ENCODE measurements at regions of chr14 and their contacts with region 1.

Region 1: DNA sequence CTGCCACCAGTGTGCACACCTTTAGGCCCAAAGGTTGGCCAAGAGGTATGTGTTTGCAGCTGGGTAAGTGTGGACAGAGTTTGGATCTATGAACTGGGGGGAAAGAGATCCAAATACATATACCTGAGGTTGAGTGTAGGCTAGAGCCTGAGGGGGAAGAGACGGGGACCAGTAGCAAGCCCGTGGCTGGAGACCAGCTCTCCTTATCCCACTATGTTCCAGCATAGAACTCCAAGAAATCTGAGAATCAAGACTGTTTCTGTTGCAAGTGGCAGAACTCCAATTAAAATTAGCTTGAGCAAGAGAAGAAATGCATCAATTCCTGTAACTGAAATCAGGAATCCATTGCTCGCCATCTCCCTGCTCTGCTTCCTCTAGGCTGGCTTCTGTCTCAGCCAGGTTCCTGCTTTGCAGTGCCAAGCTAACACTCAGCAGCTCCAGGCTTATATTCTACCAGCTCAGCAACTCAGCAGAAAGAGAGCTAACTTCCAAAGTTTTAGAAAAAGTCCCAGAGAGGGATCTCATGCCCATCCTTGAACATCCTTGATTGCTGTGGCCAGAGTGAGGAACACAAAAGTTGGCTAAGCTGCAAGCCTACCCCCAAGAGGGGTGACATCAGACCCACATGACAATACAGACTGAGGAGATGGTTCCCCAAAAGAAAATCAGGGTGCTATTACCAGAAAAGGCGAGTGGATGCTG is 1.5 kb upstream of the PCK2 start:
- DNase-seq: no peak
- ATAC-seq: no peak
- H3K4me3 ChIP-seq: no peak overlapping the region
- H3K27ac ChIP-seq: peak overlapping the region; percentile 84; the same call in 1 of the 2 replicates
- H3K4me1 ChIP-seq: peaks cover 5% of the 10 kb centered on the region; the same call in 1 of the 2 replicates
- H3K27me3 ChIP-seq: no peaks in the 10 kb centered on the region
- CTCF ChIP-seq: no peak

Region 2: GRCh38 chr14:23580948-23581281 is 511.7 kb before region 1 on chr14:
- CTCF ChIA-PET with region 1: no interaction called
- POLR2A ChIA-PET with region 1: no interaction called
- in situ Hi-C with region 1: no loop called
- intact Hi-C with region 1: no loop called
- DNase-seq: no peak
- ATAC-seq: no peak
- H3K4me3 ChIP-seq: no peak overlapping the region
- H3K27ac ChIP-seq: no peak overlapping the region
- H3K4me1 ChIP-seq: no peaks in the 10 kb centered on the region
- H3K27me3 ChIP-seq: no peaks in the 10 kb centered on the region
- CTCF ChIP-seq: no peak

Region 3: GRCh38 chr14:24013654-24014514 is 78.8 kb before region 1 on chr14:
- CTCF ChIA-PET with region 1: no interaction called
- POLR2A ChIA-PET with region 1: no interaction called
- in situ Hi-C with region 1: no loop called
- intact Hi-C with region 1: loop called (anchors 2 kb)
- DNase-seq: peak; percentile 54
- ATAC-seq: peak; percentile 91; the same call in 1 of the 2 replicates
- H3K4me3 ChIP-seq: no peak overlapping the region
- H3K27ac ChIP-seq: no peak overlapping the region
- H3K4me1 ChIP-seq: no peaks in the 10 kb centered on the region
- H3K27me3 ChIP-seq: no peaks in the 10 kb centered on the region
- CTCF ChIP-seq: peak; percentile 81

Region 4: GRCh38 chr14:24058260-24058950 is 34.3 kb before region 1 on chr14:
- CTCF ChIA-PET with region 1: interaction called, 50 read pairs
- POLR2A ChIA-PET with region 1: no interaction called
- in situ Hi-C with region 1: no loop called
- intact Hi-C with region 1: loop called (anchors 1 kb)
- DNase-seq: peak; percentile 53
- ATAC-seq: peak; percentile 89
- H3K4me3 ChIP-seq: no peak overlapping the region
- H3K27ac ChIP-seq: no peak overlapping the region
- H3K4me1 ChIP-seq: no peaks in the 10 kb centered on the region
- H3K27me3 ChIP-seq: no peaks in the 10 kb centered on the region; the same call in 1 of the 2 replicates
- CTCF ChIP-seq: peak; percentile 83

Region 5: GRCh38 chr14:24070285-24071143 is 22.1 kb before region 1 on chr14:
- CTCF ChIA-PET with region 1: no interaction called
- POLR2A ChIA-PET with region 1: interaction called, 10 read pairs
- in situ Hi-C with region 1: no loop called
- intact Hi-C with region 1: no loop called
- DNase-seq: no peak
- ATAC-seq: no peak
- H3K4me3 ChIP-seq: no peak overlapping the region
- H3K27ac ChIP-seq: no peak overlapping the region
- H3K4me1 ChIP-seq: no peaks in the 10 kb centered on the region
- H3K27me3 ChIP-seq: no peaks in the 10 kb centered on the region
- CTCF ChIP-seq: no peak

Region 6: DNA sequence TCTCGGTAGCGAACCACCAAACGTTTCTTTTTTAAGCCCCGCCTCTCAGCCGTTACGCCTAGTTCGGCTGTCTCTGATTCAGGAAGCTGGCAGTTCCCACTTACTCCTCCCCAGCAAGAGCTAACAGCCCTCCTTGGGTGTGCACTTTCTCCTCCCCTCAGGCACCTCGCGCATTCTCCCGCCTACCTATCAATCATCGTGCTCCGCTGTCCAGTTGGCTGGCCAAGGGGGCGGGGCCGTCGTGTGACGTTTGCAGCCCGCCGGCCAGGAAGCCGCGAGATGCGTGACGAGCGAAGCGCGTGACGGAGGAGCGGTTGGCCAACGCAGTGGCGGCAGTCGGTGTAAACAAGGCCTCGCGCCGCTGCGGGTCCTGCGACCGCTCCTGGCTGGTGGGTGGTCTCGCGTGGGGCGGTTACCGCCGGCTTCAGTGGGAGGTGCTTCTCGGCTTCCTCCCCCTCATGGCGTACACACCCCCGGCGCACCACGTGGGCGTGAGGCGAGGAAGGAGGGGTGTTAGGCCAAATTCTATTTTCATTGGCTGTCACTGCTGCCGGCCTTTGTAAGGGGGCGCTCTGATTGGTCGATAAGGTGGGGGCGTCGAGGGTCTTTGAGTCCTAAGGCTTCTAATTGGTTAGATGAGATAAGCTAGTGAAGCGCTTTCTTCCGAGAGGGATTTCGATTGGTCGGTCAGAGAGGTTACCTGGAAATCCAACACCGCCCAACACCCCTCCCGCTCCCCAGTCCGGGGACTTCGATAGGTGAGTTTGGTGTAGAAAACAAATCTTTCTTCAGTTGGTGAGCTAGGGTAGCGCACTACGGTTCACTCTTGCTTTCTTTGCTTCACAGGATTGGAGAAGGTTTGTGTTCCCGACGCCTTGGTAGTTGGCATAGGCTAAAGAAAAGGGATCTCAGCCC is 22.1 kb after region 1 on chr14 and contains the starts of genes DCAF11 and NRL:
- CTCF ChIA-PET with region 1: interaction called, 12 read pairs
- POLR2A ChIA-PET with region 1: no interaction called
- in situ Hi-C with region 1: no loop called
- intact Hi-C with region 1: no loop called
- DNase-seq: peak; percentile 95
- ATAC-seq: peak; percentile 95
- H3K4me3 ChIP-seq: peak within 1 kb of the TSS; percentile 86 to 98
- H3K27ac ChIP-seq: peak within 1 kb of the TSS; percentile 95
- H3K4me1 ChIP-seq: no peaks in the 10 kb centered on the region
- H3K27me3 ChIP-seq: no peaks in the 10 kb centered on the region
- CTCF ChIP-seq: no peak
- total RNA-seq, gene DCAF11: 37.4 TPM
- total RNA-seq, gene NRL: 1.4 TPM

Measured in Panc1 (cell line).